Endothelial cell of umbilical vein (primary cell): ENCODE measurements at regions of chr21 and their contacts with region 1.

Region 1: DNA sequence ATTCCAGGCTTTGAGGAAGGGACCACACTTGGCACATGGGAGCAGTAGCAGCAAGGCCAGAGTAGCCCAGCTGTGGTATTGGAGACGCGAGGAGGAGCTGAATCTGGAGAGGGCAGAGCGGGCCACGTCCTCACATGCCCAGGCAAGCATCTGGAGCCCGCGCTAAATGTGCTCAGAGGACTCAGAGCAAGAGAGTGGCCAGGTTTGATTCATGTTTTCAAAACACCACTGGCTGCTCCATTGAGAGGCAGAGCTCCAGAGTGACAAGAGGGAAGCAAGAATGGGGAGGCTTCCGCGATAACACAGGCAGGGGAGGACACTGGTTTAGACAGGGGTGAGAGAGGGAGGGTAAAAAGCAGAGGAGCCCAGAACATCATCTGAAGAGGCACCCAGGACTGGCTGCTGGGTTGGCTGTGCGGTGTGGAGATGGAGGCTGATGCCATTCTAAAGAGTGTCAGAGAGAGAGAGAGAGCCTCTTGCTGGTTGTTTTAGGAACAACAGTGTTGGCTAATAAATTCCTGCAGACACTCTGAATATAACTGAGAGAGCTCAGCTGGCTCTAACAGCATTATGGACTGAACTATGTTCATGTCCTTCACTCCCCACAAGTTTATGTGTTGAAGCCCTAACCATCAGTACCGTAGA is 32.3 kb downstream of the RCAN1 start:
- DNase-seq: peak; percentile 49
- H3K4me3 ChIP-seq: no peak overlapping the region
- H3K27ac ChIP-seq: no peak overlapping the region
- H3K4me1 ChIP-seq: no peaks in the 10 kb centered on the region
- H3K27me3 ChIP-seq: no peaks in the 10 kb centered on the region
- CTCF ChIP-seq: peak; percentile 30 to 56
- POLR2A ChIP-seq: no peak

Region 2: GRCh38 chr21:34517491-34518245 is 65.0 kb before region 1 on chr21:
- CTCF ChIA-PET with region 1: interaction called, 31 read pairs
- POLR2A ChIA-PET with region 1: no interaction called
- dilution Hi-C with region 1: no loop called
- intact Hi-C with region 1: no loop called
- DNase-seq: peak; percentile 22
- H3K4me3 ChIP-seq: no peak overlapping the region
- H3K27ac ChIP-seq: no peak overlapping the region
- H3K4me1 ChIP-seq: no peaks in the 10 kb centered on the region
- H3K27me3 ChIP-seq: no peaks in the 10 kb centered on the region
- CTCF ChIP-seq: peak; percentile 14
- POLR2A ChIP-seq: no peak

Region 3: DNA sequence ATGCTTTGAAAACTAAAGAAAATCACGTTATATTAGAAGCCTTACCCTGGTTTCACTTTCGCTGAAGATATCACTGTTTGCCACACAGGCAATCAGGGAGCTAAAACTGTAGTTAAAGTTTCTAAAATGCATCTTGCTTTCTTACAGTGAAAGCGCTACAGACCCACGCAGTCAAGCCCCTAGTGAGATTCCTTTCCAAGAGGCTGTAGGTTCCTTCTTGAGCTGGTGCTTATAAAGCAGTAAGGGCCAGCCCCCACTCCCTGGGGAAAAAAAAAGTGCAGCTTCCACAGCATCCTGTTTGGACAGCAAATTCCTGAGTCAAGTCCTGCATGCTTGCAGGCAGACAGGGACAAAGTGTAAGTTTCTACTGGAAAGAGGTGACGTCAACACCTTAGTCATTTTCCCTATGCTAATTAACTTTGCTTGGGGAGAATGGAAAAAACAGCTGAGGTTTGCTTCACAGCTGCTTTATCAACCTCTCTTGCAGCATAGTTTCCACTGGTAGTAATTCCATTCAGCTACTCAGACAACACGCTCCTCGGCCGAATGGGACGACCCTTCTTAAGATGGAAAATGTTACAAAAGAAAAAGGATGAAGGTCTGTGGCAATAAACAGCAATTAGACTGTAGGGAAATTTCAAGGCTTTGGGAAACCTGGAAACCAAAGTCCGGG is 55.9 kb before region 1 on chr21:
- CTCF ChIA-PET with region 1: interaction called, 32 read pairs
- POLR2A ChIA-PET with region 1: no interaction called
- dilution Hi-C with region 1: no loop called
- intact Hi-C with region 1: no loop called
- DNase-seq: peak; percentile 99
- H3K4me3 ChIP-seq: peak overlapping the region; percentile 41 to 93 (median 76)
- H3K27ac ChIP-seq: peak overlapping the region; percentile 98
- H3K4me1 ChIP-seq: peaks cover 23% of the 10 kb centered on the region
- H3K27me3 ChIP-seq: no peaks in the 10 kb centered on the region
- CTCF ChIP-seq: no peak
- POLR2A ChIP-seq: peak; percentile 97

Region 4: DNA sequence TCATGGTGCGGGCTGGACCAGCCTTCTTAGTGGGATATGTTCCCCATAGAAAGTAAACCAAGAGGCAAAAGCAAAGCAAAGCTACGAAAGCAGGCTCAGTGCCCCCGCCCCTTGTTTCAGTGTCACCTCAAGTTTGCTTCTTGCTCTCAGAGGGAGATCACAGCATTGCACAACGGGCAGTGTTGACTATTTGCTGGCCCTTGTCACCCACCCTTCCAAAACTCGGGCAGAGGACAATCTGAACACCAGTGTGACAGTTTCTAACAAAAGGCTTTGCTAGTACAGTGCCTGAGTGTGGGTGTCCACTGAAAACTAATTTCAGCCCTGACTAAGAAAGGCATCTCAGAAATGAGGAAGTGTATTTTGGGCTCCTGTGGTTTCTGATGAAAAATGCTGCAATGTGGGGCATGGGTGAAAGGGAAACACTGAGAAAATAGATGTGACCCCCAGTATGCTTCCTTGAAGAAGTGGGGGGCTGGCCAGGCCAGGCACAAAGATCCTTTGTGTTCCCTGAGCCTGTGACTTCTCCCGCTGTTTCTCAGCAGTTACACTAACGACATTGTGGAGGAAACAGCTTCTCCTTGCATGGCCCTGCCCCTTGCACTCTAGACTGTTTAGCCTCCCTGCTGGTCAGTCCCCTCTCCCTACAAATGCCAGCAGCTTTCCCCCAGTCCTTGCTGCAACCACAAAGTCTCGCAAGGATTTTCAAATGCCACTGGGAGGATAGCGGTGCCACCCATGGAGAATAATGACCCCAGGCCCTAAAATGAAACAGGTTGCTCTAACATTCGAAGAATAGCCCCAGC is 37.3 kb before region 1 on chr21:
- CTCF ChIA-PET with region 1: interaction called, 16 read pairs
- POLR2A ChIA-PET with region 1: no interaction called
- dilution Hi-C with region 1: no loop called
- intact Hi-C with region 1: loop called (anchors 1 kb)
- DNase-seq: peak; percentile 39
- H3K4me3 ChIP-seq: no peak overlapping the region
- H3K27ac ChIP-seq: no peak overlapping the region
- H3K4me1 ChIP-seq: no peaks in the 10 kb centered on the region
- H3K27me3 ChIP-seq: no peaks in the 10 kb centered on the region
- CTCF ChIP-seq: no peak
- POLR2A ChIP-seq: no peak

Region 5: DNA sequence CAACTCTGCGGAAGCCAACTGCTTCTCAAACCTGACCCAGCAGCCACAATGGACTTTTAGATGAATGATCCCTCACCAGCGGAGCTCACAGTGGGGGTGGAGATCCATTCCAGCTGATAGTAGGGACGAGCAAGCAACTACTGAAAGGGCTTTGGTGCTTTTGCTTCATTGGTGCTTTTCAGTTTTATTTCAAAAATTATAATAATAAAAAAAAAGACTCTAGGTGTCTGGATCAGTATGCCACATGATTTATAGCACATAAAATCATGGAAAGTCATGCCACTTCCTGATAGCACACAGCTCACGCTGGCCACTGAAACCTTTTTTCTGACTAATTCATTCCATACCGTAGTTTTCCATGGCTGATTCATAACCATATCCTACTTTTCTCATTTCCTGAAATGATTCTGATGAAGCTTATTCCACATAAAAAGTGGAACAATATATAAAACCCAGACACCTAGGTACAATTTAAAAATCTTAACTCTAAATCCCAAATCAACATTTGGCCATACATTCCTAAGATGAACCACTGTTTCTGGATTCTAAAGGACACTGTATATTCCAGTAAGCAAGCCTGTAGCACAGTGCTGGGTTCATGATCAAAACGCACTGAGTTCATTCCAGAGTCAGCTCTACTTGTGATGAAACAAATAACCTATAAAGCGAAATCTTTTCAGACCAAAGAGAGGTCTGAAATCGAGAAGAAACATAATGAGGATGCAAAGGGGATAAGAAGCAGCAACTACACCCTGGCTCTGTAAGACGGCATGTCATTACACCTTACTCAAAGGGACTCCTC is 29.3 kb before region 1 on chr21:
- CTCF ChIA-PET with region 1: interaction called, 10 read pairs
- POLR2A ChIA-PET with region 1: no interaction called
- dilution Hi-C with region 1: no loop called
- intact Hi-C with region 1: no loop called
- DNase-seq: peak; percentile 96
- H3K4me3 ChIP-seq: peak overlapping the region in 1 of 3 experiments; percentile 9
- H3K27ac ChIP-seq: peak overlapping the region; percentile 81
- H3K4me1 ChIP-seq: peaks cover 21% of the 10 kb centered on the region
- H3K27me3 ChIP-seq: no peaks in the 10 kb centered on the region
- CTCF ChIP-seq: no peak
- POLR2A ChIP-seq: no peak

Region 6: DNA sequence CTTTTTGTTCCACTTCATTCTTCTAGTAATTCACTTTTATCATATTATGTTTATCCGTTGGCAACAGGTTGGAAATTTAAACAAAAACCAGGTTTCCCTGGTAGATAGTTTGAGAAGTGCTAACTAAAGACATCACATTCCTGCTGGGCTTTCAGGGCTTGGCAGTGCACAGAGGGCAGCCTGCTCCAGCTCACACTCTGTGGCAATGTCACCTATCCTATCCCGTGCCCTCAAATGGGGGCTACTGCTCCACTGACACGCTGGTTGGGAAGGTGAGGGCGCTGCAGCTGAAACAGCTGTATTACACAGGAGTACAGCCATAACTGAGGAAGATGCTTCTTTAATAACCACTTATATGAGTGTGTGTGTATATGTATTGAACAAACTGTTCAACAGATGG is 17.4 kb before region 1 on chr21:
- CTCF ChIA-PET with region 1: interaction called, 15 read pairs
- POLR2A ChIA-PET with region 1: no interaction called
- dilution Hi-C with region 1: no loop called
- intact Hi-C with region 1: no loop called
- DNase-seq: no peak
- H3K4me3 ChIP-seq: no peak overlapping the region
- H3K27ac ChIP-seq: no peak overlapping the region
- H3K4me1 ChIP-seq: peaks cover 4% of the 10 kb centered on the region
- H3K27me3 ChIP-seq: no peaks in the 10 kb centered on the region
- CTCF ChIP-seq: no peak
- POLR2A ChIP-seq: no peak

Region 7: DNA sequence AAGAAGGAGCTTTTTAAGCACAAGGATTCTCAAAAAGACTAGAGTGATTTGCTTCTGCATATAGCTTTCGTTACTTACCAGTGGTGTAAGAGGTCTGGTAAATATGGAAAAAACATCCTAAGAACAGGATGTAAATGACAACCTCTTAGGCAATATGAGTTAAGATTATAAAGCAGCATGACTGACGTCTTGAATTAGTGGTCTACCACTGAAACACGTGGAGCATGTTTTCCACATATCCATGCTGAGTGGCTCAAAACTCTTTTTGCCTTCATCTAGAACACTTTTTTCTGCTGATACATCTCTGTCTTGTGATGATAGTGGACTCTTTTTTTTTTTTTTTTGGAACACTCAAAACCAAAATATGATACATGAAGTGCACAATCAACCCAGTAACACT is 12.3 kb before region 1 on chr21:
- CTCF ChIA-PET with region 1: interaction called, 15 read pairs
- POLR2A ChIA-PET with region 1: no interaction called
- dilution Hi-C with region 1: no loop called
- intact Hi-C with region 1: no loop called
- DNase-seq: no peak
- H3K4me3 ChIP-seq: no peak overlapping the region
- H3K27ac ChIP-seq: no peak overlapping the region
- H3K4me1 ChIP-seq: peaks cover 4% of the 10 kb centered on the region
- H3K27me3 ChIP-seq: no peaks in the 10 kb centered on the region
- CTCF ChIP-seq: no peak
- POLR2A ChIP-seq: no peak

Region 8: GRCh38 chr21:34900376-34900775 is 317.7 kb after region 1 on chr21:
- CTCF ChIA-PET with region 1: no interaction called
- POLR2A ChIA-PET with region 1: no interaction called
- dilution Hi-C with region 1: no loop called
- intact Hi-C with region 1: no loop called
- DNase-seq: no peak
- H3K4me3 ChIP-seq: no peak overlapping the region
- H3K27ac ChIP-seq: no peak overlapping the region
- H3K4me1 ChIP-seq: no peaks in the 10 kb centered on the region
- H3K27me3 ChIP-seq: peaks cover 32 to 63% of the 10 kb centered on the region in 2 experiments
- CTCF ChIP-seq: no peak
- POLR2A ChIP-seq: no peak